ENCODE measurements at regions of chr1 and their contacts with region 1.

Region 1: DNA sequence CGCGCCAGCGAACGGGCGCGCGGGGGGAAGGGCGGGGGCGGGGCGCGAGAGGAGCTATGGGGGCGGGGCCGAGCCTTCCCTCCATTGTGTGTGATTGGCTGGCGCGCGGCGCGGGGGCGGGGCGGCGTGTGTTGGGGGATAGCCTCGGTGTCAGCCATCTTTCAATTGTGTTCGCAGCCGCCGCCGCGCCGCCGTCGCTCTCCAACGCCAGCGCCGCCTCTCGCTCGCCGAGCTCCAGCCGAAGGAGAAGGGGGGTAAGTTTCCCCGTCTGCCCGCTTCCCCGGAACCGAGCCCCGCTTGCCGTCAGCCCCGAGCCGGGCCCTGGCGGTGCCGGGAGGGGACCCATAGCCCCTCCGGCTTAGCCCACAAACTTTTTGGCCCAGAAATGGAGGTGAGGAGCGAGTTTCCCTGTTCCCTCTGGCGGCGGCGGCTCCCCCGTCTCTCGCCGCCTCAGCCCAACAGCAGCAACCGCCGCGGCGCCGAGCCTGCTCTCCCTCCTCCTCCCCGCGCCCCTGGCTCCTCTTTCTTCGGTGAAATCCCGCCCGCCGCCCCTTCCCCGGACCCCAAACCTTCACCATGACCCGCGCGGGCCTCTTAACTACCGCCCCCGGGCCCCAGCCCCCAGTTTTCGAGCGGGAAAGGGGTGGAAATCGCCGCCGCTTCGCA is at the start of gene H3-3A:
- DNase-seq: peak; percentile 99
- ATAC-seq: peak; percentile 87
- H3K4me3 Mint-ChIP-seq: peak within 1 kb of the TSS; percentile 97
- H3K27ac Mint-ChIP-seq: peak within 1 kb of the TSS; percentile 100
- H3K4me1 Mint-ChIP-seq: peaks cover 34% of the 10 kb centered on the region
- H3K27me3 Mint-ChIP-seq: no peaks in the 10 kb centered on the region
- total RNA-seq, gene H3-3A: 176 to 275 TPM

Region 2: DNA sequence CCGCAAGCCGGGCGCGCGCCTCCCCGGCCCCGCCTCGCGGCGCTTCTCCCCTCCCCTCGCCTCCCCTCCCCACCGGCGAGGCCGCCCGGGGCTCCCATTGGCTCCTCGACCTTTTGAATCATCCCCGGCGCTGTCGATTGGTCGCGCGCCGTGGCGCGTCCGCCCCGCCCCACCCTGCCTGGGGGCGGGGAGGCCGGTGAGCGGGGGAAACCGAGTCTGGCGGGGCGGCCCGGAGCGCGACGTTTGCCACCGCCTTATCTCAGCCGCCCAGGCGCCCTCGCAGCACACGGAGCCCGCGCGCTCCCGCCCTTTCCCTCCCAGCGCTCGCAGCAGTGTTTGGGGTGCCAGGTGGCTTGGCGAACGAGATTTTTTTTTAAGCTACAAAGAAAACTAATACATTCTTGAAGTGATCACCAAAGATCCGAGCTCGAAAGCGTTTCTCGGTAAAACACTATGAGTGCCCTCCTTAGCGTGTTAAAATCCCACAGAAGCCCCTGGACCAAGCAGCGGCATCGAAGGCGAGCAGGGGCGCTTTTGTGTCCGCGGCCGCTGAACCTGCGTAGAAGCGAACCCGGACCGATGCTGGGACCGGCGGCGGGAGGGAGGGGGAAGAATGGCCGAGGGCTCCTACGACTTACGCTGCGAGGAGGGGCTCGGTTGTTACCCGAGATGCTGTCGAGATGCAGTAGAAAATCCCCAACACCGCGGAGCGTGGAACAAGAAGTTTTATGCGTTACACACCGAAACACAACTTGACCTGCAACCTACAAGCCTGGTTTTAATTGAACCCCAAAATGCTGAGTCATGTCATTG is 634.4 kb before region 1 on chr1:
- CTCF ChIA-PET with region 1: no interaction called
- POLR2A ChIA-PET with region 1: no interaction called
- intact Hi-C with region 1: loop called in 1 of 2 experiments (anchors 1 kb)
- DNase-seq: peak; percentile 95
- ATAC-seq: peak; percentile 92
- H3K4me3 Mint-ChIP-seq: peak overlapping the region; percentile 86
- H3K27ac Mint-ChIP-seq: peak overlapping the region; percentile 96
- H3K4me1 Mint-ChIP-seq: peaks cover 45% of the 10 kb centered on the region
- H3K27me3 Mint-ChIP-seq: no peaks in the 10 kb centered on the region

Region 3: DNA sequence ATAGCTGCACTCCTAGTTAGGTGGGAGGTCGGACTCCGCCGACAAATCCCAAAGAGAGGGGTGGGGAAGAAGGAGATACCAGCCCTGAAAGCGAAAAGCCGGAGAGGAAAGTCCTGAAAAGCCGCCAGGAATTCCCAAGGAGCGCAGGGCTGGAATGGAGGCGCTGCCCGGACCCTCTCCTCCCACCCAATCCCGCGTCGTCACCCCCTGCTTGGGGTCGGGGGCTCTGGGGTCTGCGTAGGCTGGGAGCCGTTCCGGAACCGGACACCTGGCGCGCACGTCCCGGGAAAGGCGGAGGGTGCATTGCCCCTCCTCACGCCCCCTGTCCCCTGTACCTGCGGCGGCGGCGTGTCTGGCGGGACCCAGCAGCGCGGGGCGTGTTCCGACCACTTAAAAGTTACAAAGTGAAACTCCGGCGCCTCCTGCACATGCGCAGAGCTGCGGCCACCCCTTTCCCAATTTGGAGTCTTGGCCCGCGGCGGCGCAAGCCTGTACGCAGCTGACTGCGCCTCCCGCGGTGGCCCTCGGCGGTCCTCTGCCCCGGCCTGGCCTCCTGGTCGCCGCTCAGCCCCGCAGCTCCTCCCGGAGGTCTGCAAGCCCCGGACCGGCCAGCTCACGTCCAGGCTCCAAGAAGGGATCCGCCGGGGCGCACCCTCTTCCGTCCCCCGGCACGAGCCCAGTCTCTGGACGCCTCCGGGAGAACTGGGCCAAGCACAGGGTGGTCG is 180.6 kb before region 1 on chr1 and contains the start of gene TMEM63A:
- CTCF ChIA-PET with region 1: no interaction called
- POLR2A ChIA-PET with region 1: no interaction called
- intact Hi-C with region 1: loop called in 1 of 2 experiments (anchors 5 kb)
- DNase-seq: peak; percentile 92
- ATAC-seq: peak; percentile 55
- H3K4me3 Mint-ChIP-seq: peak within 1 kb of the TSS; percentile 89
- H3K27ac Mint-ChIP-seq: peak within 1 kb of the TSS; percentile 91
- H3K4me1 Mint-ChIP-seq: peaks cover 50% of the 10 kb centered on the region
- H3K27me3 Mint-ChIP-seq: no peaks in the 10 kb centered on the region
- total RNA-seq, gene TMEM63A: 47.3 to 48.0 TPM

Region 4: GRCh38 chr1:225999227-225999911 is 63.3 kb before region 1 on chr1 and contains the start of gene SDE2:
- CTCF ChIA-PET with region 1: interaction called, 8 read pairs
- POLR2A ChIA-PET with region 1: interaction called, 34 read pairs
- intact Hi-C with region 1: loop called (anchors 1 kb)
- DNase-seq: peak; percentile 100
- ATAC-seq: peak; percentile 90
- H3K4me3 Mint-ChIP-seq: peak within 1 kb of the TSS; percentile 89
- H3K27ac Mint-ChIP-seq: peak within 1 kb of the TSS; percentile 100
- H3K4me1 Mint-ChIP-seq: peaks cover 69% of the 10 kb centered on the region
- H3K27me3 Mint-ChIP-seq: no peaks in the 10 kb centered on the region
- total RNA-seq, gene SDE2: 13.5 to 15.0 TPM

Region 5: GRCh38 chr1:226093621-226094020 is 30.9 kb after region 1 on chr1:
- CTCF ChIA-PET with region 1: interaction called, 12 read pairs
- POLR2A ChIA-PET with region 1: interaction called, 3 read pairs
- intact Hi-C with region 1: no loop called
- DNase-seq: no peak
- ATAC-seq: no peak
- H3K4me3 Mint-ChIP-seq: no peak overlapping the region
- H3K27ac Mint-ChIP-seq: no peak overlapping the region
- H3K4me1 Mint-ChIP-seq: no peaks in the 10 kb centered on the region
- H3K27me3 Mint-ChIP-seq: peaks cover 2% of the 10 kb centered on the region

Region 6: DNA sequence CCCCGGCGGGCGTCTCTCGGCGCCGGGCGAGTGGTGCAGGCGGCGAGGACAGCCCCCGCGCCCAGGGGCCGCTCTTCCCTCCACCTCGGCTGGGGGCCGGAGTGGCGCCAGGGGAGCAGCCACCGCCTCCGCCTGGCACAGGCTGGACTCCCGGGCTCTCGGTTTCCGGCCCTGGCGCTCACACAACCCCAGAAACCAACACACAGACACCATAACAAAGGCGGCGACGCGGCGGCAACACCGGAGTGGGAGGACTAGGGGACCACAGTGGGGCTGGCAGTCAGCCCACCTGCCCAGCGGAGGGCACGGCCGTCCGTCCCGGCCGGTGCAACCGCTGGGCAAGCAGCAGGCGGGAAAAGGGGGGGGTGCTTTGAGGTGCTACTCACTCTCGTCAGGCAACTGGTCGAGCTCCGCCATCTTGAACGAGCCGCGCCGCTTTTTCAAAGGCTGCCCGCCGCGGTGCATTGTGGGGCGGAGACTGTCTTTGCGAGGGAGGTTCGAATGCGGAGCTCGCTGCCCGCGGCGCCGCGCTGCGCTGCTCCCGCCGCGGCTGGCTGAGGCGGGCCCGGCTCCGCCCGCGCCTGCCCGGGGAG is 246.1 kb after region 1 on chr1 and contains the start of gene LIN9:
- CTCF ChIA-PET with region 1: interaction called, 4 read pairs
- POLR2A ChIA-PET with region 1: interaction called, 3 read pairs
- intact Hi-C with region 1: loop called in 1 of 2 experiments (anchors 1 kb)
- DNase-seq: peak; percentile 97
- ATAC-seq: peak; percentile 87
- H3K4me3 Mint-ChIP-seq: peak within 1 kb of the TSS; percentile 83
- H3K27ac Mint-ChIP-seq: peak within 1 kb of the TSS; percentile 86
- H3K4me1 Mint-ChIP-seq: peaks cover 15% of the 10 kb centered on the region
- H3K27me3 Mint-ChIP-seq: peaks cover 10% of the 10 kb centered on the region
- total RNA-seq, gene LIN9: 10.6 TPM

Region 7: DNA sequence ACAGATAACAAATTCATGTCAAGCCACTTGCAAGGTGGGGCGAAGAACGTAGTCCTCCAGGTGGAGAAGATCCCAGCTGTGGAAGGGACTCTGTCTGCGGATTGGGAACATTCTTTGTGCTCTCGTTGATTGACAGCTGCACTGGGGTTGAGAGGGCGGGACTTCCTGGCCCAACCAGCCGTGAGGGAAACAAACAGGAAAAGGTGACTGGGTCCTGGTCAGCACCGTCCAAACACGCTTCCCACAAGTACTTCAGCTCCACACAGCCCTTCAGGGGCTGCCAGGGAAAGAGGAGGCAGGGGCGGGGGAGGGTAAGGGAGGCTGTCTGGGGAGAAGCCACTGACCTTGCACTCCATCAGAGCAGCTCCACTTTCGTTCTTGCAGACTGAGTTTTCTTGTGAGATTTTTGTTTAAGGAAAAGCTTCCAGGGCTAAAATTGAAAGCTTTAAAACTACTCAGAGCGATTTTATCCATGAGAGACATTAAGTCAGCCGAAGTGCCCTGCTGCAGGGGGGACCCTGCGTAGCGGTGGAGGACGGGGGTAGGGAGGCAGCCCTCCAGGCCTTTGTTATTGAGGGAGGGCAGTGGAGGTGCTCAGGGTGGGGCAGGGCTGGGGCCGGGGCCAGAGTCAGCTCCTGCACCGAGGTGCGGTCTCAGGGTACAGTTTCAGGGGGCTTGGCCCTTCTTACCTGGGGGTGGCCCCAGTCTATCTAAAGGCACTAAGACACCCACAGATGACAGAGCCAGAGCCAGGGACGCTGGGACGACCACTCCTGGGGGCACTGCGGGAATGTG is 464.3 kb after region 1 on chr1:
- CTCF ChIA-PET with region 1: no interaction called
- POLR2A ChIA-PET with region 1: no interaction called
- intact Hi-C with region 1: no loop called
- DNase-seq: no peak
- ATAC-seq: no peak
- H3K4me3 Mint-ChIP-seq: no peak overlapping the region
- H3K27ac Mint-ChIP-seq: no peak overlapping the region
- H3K4me1 Mint-ChIP-seq: no peaks in the 10 kb centered on the region
- H3K27me3 Mint-ChIP-seq: peaks cover 4% of the 10 kb centered on the region

Measured in activated CD4-positive, alpha-beta T cell treated with anti-CD3 and anti-CD28 coated beads for 36 hours (primary cell).